Mammary epithelial cell (primary cell): ENCODE measurements at regions of chr17 and their contacts with region 1.

Region 1: GRCh38 chr17:4004517-4005295 is 40.5 kb upstream of the ATP2A3 start:
- DNase-seq: no peak
- H3K4me3 ChIP-seq: no peak overlapping the region
- H3K27ac ChIP-seq: no peak overlapping the region
- H3K4me1 ChIP-seq: no peaks in the 10 kb centered on the region
- H3K27me3 ChIP-seq: no peaks in the 10 kb centered on the region
- CTCF ChIP-seq: peak; percentile 59 to 72

Region 2: GRCh38 chr17:3913531-3914311 is 91.0 kb before region 1 on chr17:
- CTCF ChIA-PET with region 1: no interaction called
- dilution Hi-C with region 1: loop called (anchors 5 kb)
- in situ Hi-C with region 1: no loop called
- intact Hi-C with region 1: loop called (anchors 1 kb)
- DNase-seq: peak; percentile 35
- H3K4me3 ChIP-seq: no peak overlapping the region
- H3K27ac ChIP-seq: no peak overlapping the region
- H3K4me1 ChIP-seq: no peaks in the 10 kb centered on the region
- H3K27me3 ChIP-seq: no peaks in the 10 kb centered on the region
- CTCF ChIP-seq: peak; percentile 97 to 98

Region 3: GRCh38 chr17:4097165-4097960 is 92.7 kb after region 1 on chr17:
- CTCF ChIA-PET with region 1: no interaction called
- dilution Hi-C with region 1: loop called (anchors 5 kb)
- in situ Hi-C with region 1: no loop called
- intact Hi-C with region 1: no loop called
- DNase-seq: no peak
- H3K4me3 ChIP-seq: no peak overlapping the region
- H3K27ac ChIP-seq: no peak overlapping the region
- H3K4me1 ChIP-seq: no peaks in the 10 kb centered on the region
- H3K27me3 ChIP-seq: no peaks in the 10 kb centered on the region
- CTCF ChIP-seq: no peak